Transverse colon (tissue), 4 donors: ENCODE measurements at regions of chr20 and their contacts with region 1.

Region 1: GRCh38 chr20:60935971-60936370 is 316.1 kb upstream of the CDH4 start:
- DNase-seq: no peak
- H3K4me3 ChIP-seq: no peak overlapping the region
- H3K27ac ChIP-seq: no peak overlapping the region
- H3K4me1 ChIP-seq: no peaks in the 10 kb centered on the region
- H3K27me3 ChIP-seq: no peaks in the 10 kb centered on the region
- CTCF ChIP-seq: no peak
- EP300 ChIP-seq: no peak
- POLR2A ChIP-seq: no peak

Region 2: DNA sequence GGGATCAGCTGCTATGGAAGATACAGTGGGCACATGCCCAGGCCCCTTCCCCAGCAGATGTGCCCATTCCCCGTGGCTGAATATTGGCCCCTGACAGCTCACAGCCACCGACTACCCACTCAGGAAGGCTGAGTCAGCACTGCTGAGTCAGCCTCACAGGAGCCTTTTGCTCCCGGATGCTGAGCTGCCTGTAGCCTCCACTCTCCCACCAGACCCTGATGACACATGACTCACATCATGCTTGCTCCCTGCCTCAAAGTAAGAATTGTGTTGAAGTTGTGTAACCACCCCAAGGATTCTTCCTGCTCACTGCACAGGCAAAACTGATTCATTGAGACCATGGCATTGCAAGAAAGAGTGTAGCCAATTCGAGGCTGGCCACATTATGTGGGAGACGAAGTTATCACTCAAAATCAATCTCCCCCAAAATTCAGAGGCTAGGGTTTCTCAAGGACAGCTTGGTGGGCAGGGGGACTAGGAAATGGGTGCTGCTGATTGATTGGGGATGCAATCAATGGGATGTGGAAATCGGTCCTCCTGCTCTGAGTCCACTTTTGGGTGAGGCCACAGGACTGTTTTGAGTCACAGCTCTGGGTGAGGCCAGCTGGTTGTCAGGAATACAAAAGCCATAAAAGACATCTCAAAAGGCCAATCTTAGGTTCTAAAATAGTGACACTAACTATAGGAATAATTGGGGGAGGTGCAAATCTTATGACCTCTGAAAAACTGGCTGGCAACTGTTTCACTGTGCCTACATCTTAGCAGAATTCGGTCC is 240.6 kb before region 1 on chr20:
- in situ Hi-C with region 1: no loop called
- intact Hi-C with region 1: no loop called
- DNase-seq: no peak
- H3K4me3 ChIP-seq: no peak overlapping the region
- H3K27ac ChIP-seq: no peak overlapping the region
- H3K4me1 ChIP-seq: no peaks in the 10 kb centered on the region
- H3K27me3 ChIP-seq: no peaks in the 10 kb centered on the region
- CTCF ChIP-seq: no peak
- EP300 ChIP-seq: no peak
- POLR2A ChIP-seq: no peak

Region 3: GRCh38 chr20:60837173-60837770 is 98.7 kb before region 1 on chr20:
- in situ Hi-C with region 1: loop called in 1 of 4 experiments (anchors 25 kb)
- intact Hi-C with region 1: no loop called
- DNase-seq: no peak
- H3K4me3 ChIP-seq: no peak overlapping the region
- H3K27ac ChIP-seq: no peak overlapping the region
- H3K4me1 ChIP-seq: no peaks in the 10 kb centered on the region
- H3K27me3 ChIP-seq: no peaks in the 10 kb centered on the region
- CTCF ChIP-seq: no peak
- EP300 ChIP-seq: no peak
- POLR2A ChIP-seq: no peak

Region 4: GRCh38 chr20:60962367-60963045 is 26.5 kb after region 1 on chr20:
- in situ Hi-C with region 1: no loop called
- intact Hi-C with region 1: no loop called
- DNase-seq: no peak
- H3K4me3 ChIP-seq: no peak overlapping the region
- H3K27ac ChIP-seq: no peak overlapping the region
- H3K4me1 ChIP-seq: no peaks in the 10 kb centered on the region
- H3K27me3 ChIP-seq: no peaks in the 10 kb centered on the region
- CTCF ChIP-seq: no peak
- EP300 ChIP-seq: no peak
- POLR2A ChIP-seq: no peak

Region 5: DNA sequence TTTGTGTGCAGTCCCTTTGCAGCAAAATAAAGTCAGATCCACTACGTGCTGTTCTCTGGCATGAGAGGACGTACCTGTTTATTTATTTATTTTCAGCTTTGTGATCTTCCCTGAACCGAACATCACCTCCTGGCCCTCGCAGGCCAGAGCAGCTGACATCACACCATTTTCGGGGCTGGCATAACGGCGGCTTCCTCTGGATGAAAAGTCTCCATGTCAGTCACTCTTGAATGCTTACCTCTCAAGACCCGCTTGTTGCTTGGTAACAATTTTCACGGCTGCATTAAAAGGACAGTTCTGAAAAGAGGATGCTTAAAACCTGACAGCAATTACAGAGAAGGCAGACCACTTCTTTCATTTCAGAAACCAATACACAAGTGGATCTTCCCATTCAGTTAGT is 156.2 kb after region 1 on chr20:
- in situ Hi-C with region 1: no loop called
- intact Hi-C with region 1: no loop called
- DNase-seq: no peak
- H3K4me3 ChIP-seq: no peak overlapping the region
- H3K27ac ChIP-seq: no peak overlapping the region
- H3K4me1 ChIP-seq: no peaks in the 10 kb centered on the region
- H3K27me3 ChIP-seq: no peaks in the 10 kb centered on the region
- CTCF ChIP-seq: no peak
- EP300 ChIP-seq: no peak
- POLR2A ChIP-seq: no peak